ENCODE measurements at regions of chr22 and their contacts with region 1.

Region 1: GRCh38 chr22:38353142-38353629 is 36.0 kb upstream of the CSNK1E start:
- DNase-seq: no peak
- ATAC-seq: peak; percentile 95
- H3K4me3 ChIP-seq: no peak overlapping the region
- H3K27ac ChIP-seq: no peak overlapping the region
- H3K4me1 ChIP-seq: no peaks in the 10 kb centered on the region
- H3K27me3 ChIP-seq: no peaks in the 10 kb centered on the region
- CTCF ChIP-seq: peak; percentile 91 to 94 (median 93)
- EP300 ChIP-seq: no peak
- POLR2A ChIP-seq: peak; percentile 40; the same call in 1 of the 2 replicates
- RAD21 ChIP-seq: peak; percentile 90

Region 2: DNA sequence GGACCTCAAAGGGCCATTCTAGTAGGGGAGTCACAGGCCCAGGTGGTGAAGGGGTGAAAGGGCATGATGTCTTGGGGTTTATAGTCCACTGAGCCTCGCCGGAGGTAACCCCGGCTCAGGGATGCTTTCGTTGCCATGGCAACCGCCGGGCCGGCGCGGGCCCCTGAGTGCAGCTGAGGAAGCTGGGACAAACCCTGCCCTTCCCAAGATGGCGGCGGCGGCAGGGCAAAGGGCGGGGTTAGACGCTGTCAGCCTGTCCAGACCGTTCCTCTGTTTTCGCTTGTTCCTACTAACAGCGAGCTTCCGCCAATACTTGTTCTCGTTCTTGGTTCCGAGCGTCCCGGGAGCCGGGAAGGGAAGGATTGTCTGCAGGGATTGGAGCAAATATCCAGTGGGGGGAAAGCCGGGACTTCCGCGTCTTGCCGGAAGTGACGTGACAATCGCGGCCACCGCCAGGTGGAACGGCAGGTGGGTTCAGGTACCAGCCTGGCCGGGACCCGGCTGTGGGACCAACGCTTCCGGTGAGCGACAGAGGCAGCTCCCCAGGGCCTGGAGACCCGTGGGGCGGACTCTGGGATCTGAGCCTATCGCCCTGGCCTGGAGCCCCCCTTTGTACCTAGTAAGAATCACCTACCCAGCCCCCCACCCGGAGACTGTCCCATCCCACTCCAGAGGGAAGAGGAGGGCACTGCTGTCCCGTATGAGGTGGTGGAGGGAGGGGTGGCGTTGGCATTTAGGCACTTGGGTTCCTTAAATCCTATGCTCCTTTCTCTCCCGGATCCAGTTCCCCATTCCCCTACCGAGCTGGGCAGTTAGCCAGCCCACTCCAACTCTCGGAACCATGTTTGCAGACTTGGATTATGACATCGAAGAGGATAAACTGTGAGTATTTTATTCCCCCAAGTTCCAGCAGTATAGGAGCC is 296.0 kb before region 1 on chr22 and contains the start of gene PICK1:
- CTCF ChIA-PET with region 1: interaction called, 13 read pairs
- POLR2A ChIA-PET with region 1: no interaction called
- RAD21 ChIA-PET with region 1: interaction called, 8 read pairs
- SMC1A ChIA-PET with region 1: interaction called, 4 read pairs
- in situ Hi-C with region 1: loop called (anchors 5 kb)
- intact Hi-C with region 1: loop called (anchors 1 kb)
- DNase-seq: peak; percentile 32
- ATAC-seq: peak; percentile 87
- H3K4me3 ChIP-seq: peak within 1 kb of the TSS; percentile 76
- H3K27ac ChIP-seq: peak within 1 kb of the TSS; percentile 94
- H3K4me1 ChIP-seq: 0 out of 2 replicates have a peak, but pooled peaks cover 3% of the 10 kb centered on the region
- H3K27me3 ChIP-seq: no peaks in the 10 kb centered on the region
- CTCF ChIP-seq: no peak
- EP300 ChIP-seq: no peak
- POLR2A ChIP-seq: peak; percentile 84
- RAD21 ChIP-seq: no peak
- polyA plus RNA-seq, gene PICK1: 0.07 to 0.84 TPM

Measured in GM12878 (cell line).